Activated CD8-positive, alpha-beta memory T cell treated with anti-CD3 and anti-CD28 coated beads, Interleukin-2, amount 10 ng/mL, durations not matched to agents 7 days and 5 days (primary cell): ENCODE measurements at regions of chr18 and their contacts with region 1.

Region 1: GRCh38 chr18:51153659-51154371 is 43.7 kb downstream of the MEX3C start:
- DNase-seq: peak; percentile 61
- ATAC-seq: peak; percentile 73
- H3K4me3 Mint-ChIP-seq: peak overlapping the region; percentile 71
- H3K27ac Mint-ChIP-seq: peak overlapping the region; percentile 92
- H3K4me1 Mint-ChIP-seq: peaks cover 35% of the 10 kb centered on the region
- H3K27me3 Mint-ChIP-seq: no peaks in the 10 kb centered on the region

Region 2: DNA sequence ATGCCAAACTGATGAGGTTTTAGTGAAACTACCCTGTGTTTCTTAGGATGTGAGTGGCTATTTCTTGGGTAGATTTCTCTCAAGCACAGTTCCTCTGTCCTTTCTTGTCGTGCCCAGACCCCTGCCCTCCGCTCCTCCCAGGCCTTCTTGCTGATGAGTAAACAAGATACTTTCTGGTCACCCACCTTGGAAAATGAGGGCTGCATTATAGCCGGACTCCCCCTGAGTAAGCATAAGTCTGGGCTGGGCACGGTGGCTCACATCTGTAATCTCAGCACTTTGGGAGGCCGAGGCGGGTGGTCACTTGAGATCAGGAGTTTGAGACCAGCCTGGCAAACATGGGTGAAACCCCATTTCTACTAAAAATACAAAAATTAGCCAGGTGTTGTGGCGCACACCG is 14.9 kb before region 1 on chr18:
- CTCF ChIA-PET with region 1: no interaction called
- DNase-seq: no peak
- ATAC-seq: no peak
- H3K4me3 Mint-ChIP-seq: no peak overlapping the region
- H3K27ac Mint-ChIP-seq: no peak overlapping the region
- H3K4me1 Mint-ChIP-seq: no peaks in the 10 kb centered on the region
- H3K27me3 Mint-ChIP-seq: peaks cover 4% of the 10 kb centered on the region

Region 3: DNA sequence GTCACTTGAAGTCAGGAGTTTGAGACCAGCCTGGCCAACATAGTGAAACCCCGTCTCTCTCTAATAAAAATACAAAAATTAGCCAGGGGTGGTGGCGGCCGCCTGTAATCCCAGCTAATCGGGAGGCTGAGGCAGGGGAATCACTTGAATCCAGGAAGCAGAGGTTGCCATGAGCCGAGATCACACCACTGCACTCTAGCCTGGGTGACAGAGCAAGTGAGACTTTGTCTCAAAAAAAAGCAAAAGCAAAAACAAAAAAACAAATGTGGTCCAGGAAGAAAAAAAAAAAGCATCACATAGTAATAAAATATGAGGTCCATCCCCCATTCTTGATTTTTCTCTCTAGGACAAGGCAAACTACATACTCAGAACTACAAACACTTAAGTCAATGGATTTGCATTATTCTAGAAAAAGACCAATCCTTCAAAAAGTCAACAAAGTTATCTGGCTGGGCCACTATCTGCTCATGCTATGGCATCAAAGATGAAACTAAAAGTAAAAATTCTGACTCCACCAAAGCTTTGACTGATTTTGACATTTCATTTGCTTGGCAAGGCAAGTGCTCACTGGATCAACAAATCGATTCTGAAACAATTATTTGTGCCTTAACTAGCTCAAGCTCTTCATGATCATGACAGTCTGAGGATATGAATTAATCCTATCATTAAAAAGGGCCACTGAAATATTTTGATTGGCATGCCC is 15.3 kb after region 1 on chr18:
- CTCF ChIA-PET with region 1: interaction called, 17 read pairs
- DNase-seq: no peak
- ATAC-seq: peak; percentile 72
- H3K4me3 Mint-ChIP-seq: peak overlapping the region; percentile 42
- H3K27ac Mint-ChIP-seq: peak overlapping the region; percentile 86
- H3K4me1 Mint-ChIP-seq: peaks cover 67% of the 10 kb centered on the region
- H3K27me3 Mint-ChIP-seq: no peaks in the 10 kb centered on the region

Region 4: DNA sequence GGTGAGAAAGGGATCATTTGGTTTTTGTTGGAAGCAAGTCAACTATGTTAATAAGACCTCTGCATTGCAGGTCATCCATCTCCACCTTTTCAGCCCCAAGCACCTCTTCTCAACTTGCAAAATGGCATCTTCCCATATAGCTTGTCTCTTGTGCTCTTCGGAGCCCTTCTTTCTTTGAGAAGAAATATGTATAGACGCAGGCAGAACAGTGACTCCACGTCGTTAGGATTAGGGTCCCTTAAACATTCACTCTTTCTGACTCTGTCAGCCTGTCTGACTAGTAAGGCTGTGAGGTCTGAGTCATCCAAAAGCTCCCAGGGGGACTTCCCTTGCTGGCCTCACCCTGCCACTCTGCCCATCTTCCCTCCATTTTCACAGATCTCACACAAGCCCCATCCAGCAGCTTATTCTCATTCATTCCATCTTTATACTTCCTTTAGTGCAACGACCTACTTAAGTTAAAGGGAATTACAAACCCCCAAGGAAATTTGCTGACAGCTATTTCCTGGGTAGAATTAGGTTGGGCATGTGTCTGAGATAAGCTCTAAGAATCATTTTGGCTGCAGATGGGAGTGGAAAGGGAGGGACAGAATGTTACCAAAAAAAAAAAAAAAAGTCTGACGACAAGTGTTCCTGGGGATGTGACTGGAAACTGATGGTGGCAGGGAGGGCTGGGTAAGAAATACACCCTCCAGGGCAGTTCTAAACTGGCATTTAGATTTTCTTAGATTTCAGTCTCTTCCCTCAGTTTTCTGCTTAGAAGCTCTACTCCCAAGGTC is 81.4 kb after region 1 on chr18:
- CTCF ChIA-PET with region 1: no interaction called
- DNase-seq: peak; percentile 63
- ATAC-seq: peak; percentile 90
- H3K4me3 Mint-ChIP-seq: no peak overlapping the region
- H3K27ac Mint-ChIP-seq: peak overlapping the region; percentile 31
- H3K4me1 Mint-ChIP-seq: peaks cover 26% of the 10 kb centered on the region
- H3K27me3 Mint-ChIP-seq: peaks cover 3% of the 10 kb centered on the region